ENCODE measurements at regions of chr22 and their contacts with region 1.

Region 1: DNA sequence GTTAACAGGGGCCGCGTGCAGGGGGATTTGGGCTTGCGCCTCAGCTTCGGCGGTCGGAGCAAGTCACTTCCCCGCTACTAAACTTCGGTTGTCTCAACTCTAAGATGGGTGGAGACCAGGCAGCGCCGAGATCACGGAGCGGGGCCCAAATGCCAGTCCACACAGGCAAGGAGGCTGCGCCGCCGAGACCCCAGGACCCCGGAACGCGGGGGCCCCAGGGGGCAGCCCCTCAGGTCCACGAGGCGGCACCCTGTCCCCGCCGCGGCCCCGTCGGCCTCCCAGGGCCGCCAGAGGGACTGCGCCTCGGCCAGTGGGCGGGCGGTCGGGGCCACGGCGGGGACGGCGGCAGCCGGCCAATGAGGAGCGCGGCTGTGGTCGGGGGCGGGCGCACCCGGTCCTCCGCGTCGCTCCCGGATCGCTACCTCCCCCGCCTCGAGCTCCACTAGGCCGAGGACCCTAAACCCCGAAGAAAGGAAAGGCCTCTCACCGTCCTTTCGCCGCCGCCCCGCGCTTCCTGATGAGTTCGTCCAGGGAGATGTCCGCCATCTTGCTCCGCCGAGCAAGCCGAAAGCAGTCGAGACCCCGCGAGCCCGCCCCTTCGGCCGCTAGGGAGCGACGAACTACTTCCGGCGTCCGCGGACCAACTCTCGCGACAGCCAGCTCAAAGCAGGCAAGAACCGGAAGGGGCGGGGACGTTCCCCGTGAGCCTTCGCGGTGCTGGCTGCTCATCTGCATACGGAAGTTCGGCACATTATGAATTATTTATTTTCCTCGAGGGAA is at the start of gene POLDIP3:
- DNase-seq: peak; percentile 95 to 99 (median 98)
- ATAC-seq: peak; percentile 73 to 82 (median 80)
- H3K4me3 ChIP-seq: peak within 1 kb of the TSS; percentile 62 to 78
- H3K4me3 Mint-ChIP-seq: peak within 1 kb of the TSS; percentile 93 to 94 (median 93)
- H3K27ac ChIP-seq: peak within 1 kb of the TSS; percentile 91
- H3K27ac Mint-ChIP-seq: peak within 1 kb of the TSS; percentile 100
- H3K4me1 ChIP-seq: peaks cover 23 to 55% of the 10 kb centered on the region in 2 experiments
- H3K4me1 Mint-ChIP-seq: peaks cover 53 to 61% (median 58%) of the 10 kb centered on the region in 3 donors
- H3K27me3 ChIP-seq: no peaks in the 10 kb centered on the region
- H3K27me3 Mint-ChIP-seq: no peaks in the 10 kb centered on the region
- total RNA-seq, gene POLDIP3: 66.5 to 83.8 (median 81.0) TPM

Region 2: GRCh38 chr22:42581762-42582716 is 32.5 kb before region 1 on chr22:
- CTCF ChIA-PET with region 1: no interaction called
- POLR2A ChIA-PET with region 1: interaction called in 1 of 2 experiments, 13 read pairs
- DNase-seq: peak; percentile 61 to 89 (median 78)
- ATAC-seq: peak; percentile 91 to 96 (median 94)
- H3K4me3 ChIP-seq: peak overlapping the region; percentile 56 to 66
- H3K4me3 Mint-ChIP-seq: peak overlapping the region; percentile 88 to 96 (median 91)
- H3K27ac ChIP-seq: no peak overlapping the region
- H3K27ac Mint-ChIP-seq: peak overlapping the region; percentile 68 to 84
- H3K4me1 ChIP-seq: peaks cover 2 to 18% of the 10 kb centered on the region in 2 experiments
- H3K4me1 Mint-ChIP-seq: peaks cover 13 to 17% (median 16%) of the 10 kb centered on the region in 3 donors
- H3K27me3 ChIP-seq: no peaks in the 10 kb centered on the region
- H3K27me3 Mint-ChIP-seq: no peaks in the 10 kb centered on the region

Region 3: DNA sequence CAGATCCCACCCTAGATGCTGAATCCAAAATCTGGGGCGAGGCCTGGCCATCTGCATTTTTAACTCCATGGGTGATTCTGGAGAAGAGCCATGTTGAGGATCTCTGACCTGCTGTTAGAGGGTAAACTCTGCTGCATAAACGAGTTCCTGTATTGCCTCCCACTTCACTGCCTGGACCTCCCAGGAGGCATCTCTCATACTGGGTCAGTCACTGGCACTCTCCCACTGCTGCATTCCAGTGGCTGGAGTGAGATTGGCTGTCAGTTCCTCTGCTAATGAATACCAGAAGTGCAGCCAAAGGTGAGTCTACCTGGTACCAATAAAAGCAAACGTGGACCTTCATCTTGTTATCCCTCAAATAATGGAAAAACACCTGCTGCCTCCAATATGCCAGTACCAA is 10.1 kb before region 1 on chr22:
- CTCF ChIA-PET with region 1: no interaction called
- POLR2A ChIA-PET with region 1: no interaction called
- DNase-seq: no peak
- ATAC-seq: no peak
- H3K4me3 ChIP-seq: no peak overlapping the region
- H3K4me3 Mint-ChIP-seq: no peak overlapping the region
- H3K27ac ChIP-seq: no peak overlapping the region
- H3K27ac Mint-ChIP-seq: no peak overlapping the region
- H3K4me1 ChIP-seq: peaks cover 2 to 23% of the 10 kb centered on the region in 2 experiments
- H3K4me1 Mint-ChIP-seq: peaks cover 44 to 57% (median 48%) of the 10 kb centered on the region in 3 donors
- H3K27me3 ChIP-seq: no peaks in the 10 kb centered on the region
- H3K27me3 Mint-ChIP-seq: no peaks in the 10 kb centered on the region